ENCODE measurements at regions of chr1 and their contacts with region 1.

Region 1: GRCh38 chr1:231421993-231422764 is at the start of gene EGLN1:
- DNase-seq: peak; percentile 79
- H3K4me3 Mint-ChIP-seq: peak within 1 kb of the TSS; percentile 81
- H3K27ac Mint-ChIP-seq: peak within 1 kb of the TSS; percentile 89
- H3K4me1 Mint-ChIP-seq: peaks cover 35% of the 10 kb centered on the region
- H3K27me3 Mint-ChIP-seq: no peaks in the 10 kb centered on the region
- total RNA-seq, gene EGLN1: 9.6 to 9.8 TPM

Region 2: GRCh38 chr1:231272880-231273279 is 149.3 kb before region 1 on chr1:
- CTCF ChIA-PET with region 1: no interaction called
- intact Hi-C with region 1: loop called (anchors 5 kb)
- DNase-seq: peak; percentile 18
- H3K4me3 Mint-ChIP-seq: no peak overlapping the region
- H3K27ac Mint-ChIP-seq: peak overlapping the region; percentile 98
- H3K4me1 Mint-ChIP-seq: peaks cover 22% of the 10 kb centered on the region
- H3K27me3 Mint-ChIP-seq: no peaks in the 10 kb centered on the region

Region 3: GRCh38 chr1:231357831-231358354 is 64.3 kb before region 1 on chr1:
- CTCF ChIA-PET with region 1: interaction called, 10 read pairs
- intact Hi-C with region 1: loop called (anchors 1 kb)
- DNase-seq: peak; percentile 45
- H3K4me3 Mint-ChIP-seq: no peak overlapping the region
- H3K27ac Mint-ChIP-seq: peak overlapping the region; percentile 16
- H3K4me1 Mint-ChIP-seq: peaks cover 4% of the 10 kb centered on the region
- H3K27me3 Mint-ChIP-seq: no peaks in the 10 kb centered on the region

Region 4: DNA sequence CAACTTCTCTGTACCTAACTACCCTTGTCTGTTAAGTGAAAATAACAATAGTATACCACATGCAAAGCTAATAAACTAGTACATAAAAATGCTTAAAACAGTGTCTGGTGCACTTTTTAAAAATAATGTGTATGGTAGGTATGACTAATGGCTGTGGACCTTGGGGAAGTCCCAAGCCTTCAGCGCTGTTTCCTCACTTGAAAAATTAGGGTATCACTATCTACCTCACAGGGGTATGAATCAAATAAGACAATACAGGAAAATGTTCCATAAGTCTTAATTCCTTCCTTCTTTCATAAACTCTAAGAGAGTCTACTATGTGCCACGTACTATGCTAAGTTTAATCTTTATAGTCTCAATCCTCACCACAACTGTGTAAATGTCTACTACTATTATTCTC is 32.1 kb before region 1 on chr1:
- CTCF ChIA-PET with region 1: interaction called, 3 read pairs
- intact Hi-C with region 1: loop called (anchors 1 kb)
- DNase-seq: peak; percentile 54
- H3K4me3 Mint-ChIP-seq: no peak overlapping the region
- H3K27ac Mint-ChIP-seq: peak overlapping the region; percentile 51
- H3K4me1 Mint-ChIP-seq: peaks cover 53% of the 10 kb centered on the region
- H3K27me3 Mint-ChIP-seq: no peaks in the 10 kb centered on the region

Region 5: GRCh38 chr1:231493421-231494185 is 71.4 kb after region 1 on chr1:
- CTCF ChIA-PET with region 1: interaction called, 3 read pairs
- intact Hi-C with region 1: loop called (anchors 2 kb)
- DNase-seq: peak; percentile 35
- H3K4me3 Mint-ChIP-seq: peak overlapping the region; percentile 32
- H3K27ac Mint-ChIP-seq: peak overlapping the region; percentile 70
- H3K4me1 Mint-ChIP-seq: peaks cover 14% of the 10 kb centered on the region
- H3K27me3 Mint-ChIP-seq: peaks cover 7% of the 10 kb centered on the region

Region 6: GRCh38 chr1:231590453-231591198 is 168.4 kb after region 1 on chr1:
- CTCF ChIA-PET with region 1: interaction called, 5 read pairs
- intact Hi-C with region 1: loop called (anchors 1 kb)
- DNase-seq: peak; percentile 68
- H3K4me3 Mint-ChIP-seq: no peak overlapping the region
- H3K27ac Mint-ChIP-seq: no peak overlapping the region
- H3K4me1 Mint-ChIP-seq: peaks cover 6% of the 10 kb centered on the region
- H3K27me3 Mint-ChIP-seq: no peaks in the 10 kb centered on the region

Region 7: GRCh38 chr1:231828182-231828920 is 406.2 kb after region 1 on chr1:
- CTCF ChIA-PET with region 1: no interaction called
- intact Hi-C with region 1: no loop called
- DNase-seq: no peak
- H3K4me3 Mint-ChIP-seq: no peak overlapping the region
- H3K27ac Mint-ChIP-seq: no peak overlapping the region
- H3K4me1 Mint-ChIP-seq: no peaks in the 10 kb centered on the region
- H3K27me3 Mint-ChIP-seq: no peaks in the 10 kb centered on the region

Measured in activated naive CD4-positive, alpha-beta T cell treated with anti-CD3 and anti-CD28 coated beads for 36 hours (primary cell).